Breast epithelium (tissue), 4 donors: ENCODE measurements at regions of chr17 and their contacts with region 1.

Region 1: DNA sequence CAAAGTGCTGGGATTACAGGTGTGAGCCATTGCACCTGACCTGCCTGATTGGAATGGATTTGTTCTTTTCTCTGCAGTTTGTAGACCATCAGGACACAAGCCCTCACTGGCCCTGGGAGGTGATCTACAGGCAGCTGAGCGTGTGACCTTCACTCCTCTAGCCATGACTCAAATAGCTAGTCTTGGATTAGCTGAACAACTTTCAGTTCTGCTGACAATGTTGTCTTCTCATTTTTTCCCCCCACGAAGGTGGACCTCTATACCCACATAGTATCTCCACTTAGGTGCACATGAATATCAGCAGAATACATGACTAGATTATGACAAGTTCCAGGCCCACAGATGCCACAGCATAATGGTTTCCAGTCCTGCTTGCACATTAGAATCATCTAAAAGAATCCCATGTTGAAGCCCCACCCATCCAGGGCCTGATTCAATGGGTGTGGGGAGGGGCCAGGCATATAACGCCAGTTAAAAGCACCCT is 36.8 kb downstream of the HS3ST3B1 start:
- DNase-seq: no peak
- H3K4me3 ChIP-seq: no peak overlapping the region
- H3K27ac ChIP-seq: no peak overlapping the region
- H3K4me1 ChIP-seq: no peaks in the 10 kb centered on the region
- H3K27me3 ChIP-seq: no peaks in the 10 kb centered on the region
- CTCF ChIP-seq: no peak
- POLR2A ChIP-seq: no peak

Region 2: DNA sequence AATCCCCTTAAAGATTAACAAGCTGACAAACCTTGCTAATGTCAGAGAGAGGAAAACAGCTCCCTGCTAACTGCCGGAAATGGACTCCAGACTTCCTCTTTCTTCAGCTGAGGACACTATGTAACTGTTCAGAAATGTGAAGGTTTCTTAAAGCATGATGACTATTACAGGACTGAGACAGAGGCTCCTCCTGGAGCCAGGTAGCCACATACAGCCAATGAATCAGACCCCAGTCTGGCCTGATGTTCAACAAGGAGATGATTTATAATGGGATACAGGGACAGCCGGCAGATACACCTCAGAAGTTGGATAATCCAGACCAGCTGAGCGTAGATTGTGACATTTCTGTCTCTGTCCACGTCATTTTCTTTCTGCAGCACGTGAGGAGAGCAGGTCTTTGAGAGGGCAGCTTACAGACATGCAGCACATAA is 952.1 kb before region 1 on chr17:
- intact Hi-C with region 1: loop called (anchors 10 kb)
- DNase-seq: no peak
- H3K4me3 ChIP-seq: no peak overlapping the region
- H3K27ac ChIP-seq: no peak overlapping the region
- H3K4me1 ChIP-seq: no peaks in the 10 kb centered on the region
- H3K27me3 ChIP-seq: no peaks in the 10 kb centered on the region
- CTCF ChIP-seq: no peak
- POLR2A ChIP-seq: no peak